Common myeloid progenitor, CD34-positive (primary cell): ENCODE measurements at regions of chr20 and their contacts with region 1.

Region 1: DNA sequence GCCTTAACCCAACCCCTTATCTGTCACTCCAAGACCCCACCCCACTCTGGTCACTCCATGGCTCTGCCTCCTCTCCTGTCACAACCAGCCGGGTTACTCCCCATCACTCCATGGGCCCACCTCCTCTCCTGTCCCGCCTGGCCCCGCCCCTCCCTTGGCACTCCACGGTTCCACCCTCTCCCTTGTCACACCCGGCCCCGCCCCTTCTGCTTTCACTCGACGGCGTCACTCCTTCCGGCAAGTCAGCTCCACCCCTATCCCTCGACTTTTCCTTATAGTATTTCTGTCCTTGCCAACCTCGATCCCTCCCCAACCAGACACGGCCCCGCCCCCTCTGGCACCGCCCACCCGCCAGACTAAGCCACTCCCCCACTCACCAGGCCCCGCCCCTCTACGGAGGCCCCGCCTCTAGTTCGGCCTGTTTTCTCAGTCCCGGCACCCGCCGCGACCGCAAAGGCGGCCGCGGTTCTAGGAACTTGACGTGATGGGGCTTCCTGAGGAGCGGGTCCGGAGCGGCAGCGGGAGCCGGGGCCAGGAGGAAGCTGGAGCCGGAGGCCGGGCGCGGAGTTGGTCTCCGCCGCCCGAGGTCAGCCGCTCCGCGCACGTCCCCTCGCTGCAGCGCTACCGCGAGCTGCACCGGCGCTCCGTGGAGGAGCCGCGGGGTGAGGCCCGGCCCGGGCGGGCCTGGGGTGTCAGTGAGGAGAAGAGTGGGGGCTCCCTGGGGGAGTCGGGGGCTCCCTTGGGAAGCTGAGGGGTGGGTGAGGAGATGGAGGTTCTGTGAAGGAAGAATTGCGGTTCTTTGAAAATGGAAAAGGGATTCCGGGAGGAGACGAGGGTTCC is at the start of gene ACSS2:
- DNase-seq: peak; percentile 97 to 99 (median 98)
- H3K4me3 ChIP-seq: peak within 1 kb of the TSS; percentile 74 to 94 (median 76)
- H3K27ac ChIP-seq: peak within 1 kb of the TSS; percentile 54 to 80
- H3K4me1 ChIP-seq: peaks cover 5 to 43% (median 33%) of the 10 kb centered on the region in 4 experiments
- H3K27me3 ChIP-seq: peaks cover 0 to 3% (median 0%) of the 10 kb centered on the region in 5 experiments

Region 2: DNA sequence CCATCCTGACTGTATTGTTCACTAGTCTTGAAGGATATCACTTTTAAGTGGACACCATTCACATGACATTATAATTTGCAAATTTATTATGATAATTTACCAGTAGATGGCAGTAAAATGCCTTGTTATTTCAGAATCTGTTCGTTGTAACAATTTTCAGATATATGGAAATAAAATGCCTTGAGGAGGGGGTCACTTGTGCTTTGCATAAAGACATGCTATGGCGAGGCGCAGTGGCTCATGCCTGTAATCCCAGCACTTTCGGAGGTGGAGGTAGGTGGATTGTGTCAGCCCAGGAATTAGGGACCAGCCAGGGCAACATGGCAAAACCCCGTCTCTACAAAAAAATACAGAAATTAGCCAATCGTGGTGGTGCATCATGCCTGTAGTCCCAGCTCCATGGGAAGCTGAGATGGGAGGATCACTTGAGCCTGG is 41.9 kb before region 1 on chr20:
- CTCF ChIA-PET with region 1: interaction called, 12 read pairs
- POLR2A ChIA-PET with region 1: no interaction called
- DNase-seq: peak; percentile 40 to 68 (median 64)
- H3K4me3 ChIP-seq: no peak overlapping the region
- H3K27ac ChIP-seq: no peak overlapping the region
- H3K4me1 ChIP-seq: peaks cover 0 to 8% (median 0%) of the 10 kb centered on the region in 4 experiments
- H3K27me3 ChIP-seq: peaks cover 0 to 2% (median 0%) of the 10 kb centered on the region in 5 experiments

Region 3: DNA sequence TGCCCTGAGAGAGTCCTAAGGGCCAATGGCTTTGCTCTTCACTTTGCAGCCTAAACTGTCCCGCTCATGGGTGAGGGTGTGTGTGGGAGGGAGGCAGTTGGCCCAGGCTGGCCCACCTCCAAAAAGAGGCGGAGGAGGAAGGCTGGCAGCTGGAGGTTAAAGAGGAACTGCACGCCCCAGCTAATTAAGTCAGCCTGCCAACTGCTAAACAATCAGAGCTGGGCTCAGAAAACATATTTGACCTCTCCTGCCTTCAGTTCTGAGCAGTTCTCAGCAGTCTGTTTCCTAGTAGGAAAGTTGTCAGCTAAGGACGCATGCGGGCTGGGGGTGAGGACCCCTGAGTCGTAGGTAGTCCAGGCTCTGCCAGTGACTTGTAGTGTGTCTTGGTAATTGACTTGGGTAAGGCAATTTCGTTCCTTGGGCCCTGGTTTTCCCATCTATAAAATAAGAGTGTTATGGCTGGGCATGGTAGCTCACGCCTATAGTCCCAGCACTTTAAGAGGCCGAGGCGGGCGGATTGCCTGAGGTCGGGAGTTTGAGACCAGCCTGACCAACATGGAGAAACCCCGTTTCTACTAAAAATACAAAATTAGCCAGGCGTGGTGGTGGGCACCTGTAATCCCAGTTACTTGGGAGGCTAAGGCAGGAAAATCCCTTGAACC is 62.3 kb after region 1 on chr20:
- CTCF ChIA-PET with region 1: interaction called, 42 read pairs
- POLR2A ChIA-PET with region 1: interaction called, 4 read pairs
- DNase-seq: peak; percentile 51 to 88 (median 85)
- H3K4me3 ChIP-seq: peak overlapping the region in 2 of 7 experiments; percentile 20 to 31
- H3K27ac ChIP-seq: peak overlapping the region in 1 of 2 experiments; percentile 27
- H3K4me1 ChIP-seq: peaks cover 0 to 38% (median 22%) of the 10 kb centered on the region in 4 experiments
- H3K27me3 ChIP-seq: no peaks in the 10 kb centered on the region

Region 4: DNA sequence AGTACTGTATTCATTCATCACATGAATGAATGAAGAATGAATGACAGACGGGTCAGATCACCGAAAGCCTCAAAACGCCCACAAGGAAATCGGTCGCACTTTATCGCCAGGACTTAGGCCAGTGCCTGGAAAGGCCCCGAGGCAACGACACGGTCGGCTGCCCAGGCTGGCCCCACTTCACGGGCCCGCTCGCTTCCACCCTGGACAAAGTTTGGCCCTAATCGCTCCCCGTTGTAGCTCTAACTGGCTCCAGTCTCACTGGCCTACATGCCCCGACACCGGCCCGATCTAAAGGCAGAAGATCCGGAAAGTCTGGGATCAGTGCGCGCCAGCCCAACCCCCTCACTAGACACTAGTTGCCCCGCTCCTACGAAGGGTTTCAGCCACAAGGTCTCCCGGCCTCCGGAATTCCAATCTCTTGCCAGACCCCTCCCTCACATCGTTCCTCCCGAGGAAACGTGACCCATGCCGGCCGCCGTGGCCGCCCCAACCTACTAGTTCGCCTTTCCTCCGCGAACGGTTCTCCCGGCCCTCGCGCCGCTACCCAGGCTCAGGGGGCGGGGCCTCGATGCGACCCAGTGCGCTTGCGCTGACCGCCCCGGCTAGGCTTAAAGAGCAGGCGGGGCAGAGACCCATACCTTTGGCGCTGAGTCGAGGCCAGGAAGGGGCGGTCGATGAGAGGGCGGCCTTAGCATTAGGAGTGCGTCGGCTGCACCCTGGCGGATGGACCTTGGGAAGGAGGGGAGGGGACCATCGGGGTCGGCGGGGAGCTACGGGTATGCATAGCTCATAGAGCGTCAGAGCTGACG is 79.1 kb after region 1 on chr20 and contains the starts of genes GSS and MYH7B:
- CTCF ChIA-PET with region 1: interaction called, 87 read pairs
- POLR2A ChIA-PET with region 1: interaction called, 9 read pairs
- DNase-seq: peak; percentile 97 to 99 (median 98)
- H3K4me3 ChIP-seq: peak within 1 kb of the TSS; percentile 64 to 97 (median 84)
- H3K27ac ChIP-seq: peak within 1 kb of the TSS; percentile 74 to 90
- H3K4me1 ChIP-seq: peaks cover 8 to 16% (median 13%) of the 10 kb centered on the region in 4 experiments
- H3K27me3 ChIP-seq: no peaks in the 10 kb centered on the region

Region 5: DNA sequence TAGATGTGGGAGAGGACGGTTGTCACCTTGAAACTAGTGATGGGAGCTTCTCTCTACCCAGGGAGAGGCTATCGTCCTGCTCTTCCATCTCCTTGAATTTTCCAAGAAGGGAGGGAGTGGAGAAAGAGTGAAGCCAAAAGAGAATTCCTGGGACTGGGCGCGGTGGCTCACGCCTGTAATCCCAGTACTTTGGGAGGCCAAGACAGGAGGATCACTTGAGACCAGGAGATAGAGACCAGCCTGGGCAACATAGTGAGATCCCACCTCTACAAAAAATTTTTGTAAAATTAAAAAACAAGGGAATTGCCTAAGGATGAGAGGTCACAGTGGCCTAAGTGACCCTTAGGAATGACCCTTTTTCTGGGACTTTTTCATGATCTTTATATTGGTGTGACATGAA is 88.1 kb after region 1 on chr20:
- CTCF ChIA-PET with region 1: interaction called, 87 read pairs
- POLR2A ChIA-PET with region 1: no interaction called
- DNase-seq: no peak
- H3K4me3 ChIP-seq: no peak overlapping the region
- H3K27ac ChIP-seq: no peak overlapping the region
- H3K4me1 ChIP-seq: no peaks in the 10 kb centered on the region
- H3K27me3 ChIP-seq: no peaks in the 10 kb centered on the region